ENCODE measurements at regions of chr6 and their contacts with region 1.

Region 1: DNA sequence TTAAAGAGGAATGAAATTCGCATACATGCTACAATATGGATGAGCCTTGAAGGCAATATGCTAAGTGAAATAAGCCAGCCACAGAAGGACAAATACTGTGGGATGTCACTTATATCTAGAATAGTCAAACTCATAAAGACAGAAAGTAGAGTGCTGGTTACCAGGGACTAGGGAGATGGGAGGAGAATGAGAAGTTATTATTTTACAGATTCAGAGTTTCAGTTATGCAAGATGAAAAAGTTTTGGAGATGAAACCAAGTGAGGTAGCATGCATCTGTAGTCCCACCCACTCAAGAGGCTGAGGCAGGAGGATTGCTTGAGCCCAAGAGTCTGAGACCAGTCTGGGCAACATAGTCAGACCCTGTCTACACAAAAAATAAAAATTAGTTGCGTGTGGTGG is 82.5 kb upstream of the ARID1B start:
- DNase-seq: no peak
- ATAC-seq: no peak
- H3K4me3 ChIP-seq: no peak overlapping the region
- H3K4me3 Mint-ChIP-seq: no peak overlapping the region
- H3K27ac ChIP-seq: no peak overlapping the region
- H3K27ac Mint-ChIP-seq: no peak overlapping the region
- H3K4me1 ChIP-seq: no peaks in the 10 kb centered on the region
- H3K4me1 Mint-ChIP-seq: no peaks in the 10 kb centered on the region
- H3K27me3 ChIP-seq: no peaks in the 10 kb centered on the region
- H3K27me3 Mint-ChIP-seq: peaks cover 2% of the 10 kb centered on the region
- CTCF ChIP-seq: no peak

Region 2: DNA sequence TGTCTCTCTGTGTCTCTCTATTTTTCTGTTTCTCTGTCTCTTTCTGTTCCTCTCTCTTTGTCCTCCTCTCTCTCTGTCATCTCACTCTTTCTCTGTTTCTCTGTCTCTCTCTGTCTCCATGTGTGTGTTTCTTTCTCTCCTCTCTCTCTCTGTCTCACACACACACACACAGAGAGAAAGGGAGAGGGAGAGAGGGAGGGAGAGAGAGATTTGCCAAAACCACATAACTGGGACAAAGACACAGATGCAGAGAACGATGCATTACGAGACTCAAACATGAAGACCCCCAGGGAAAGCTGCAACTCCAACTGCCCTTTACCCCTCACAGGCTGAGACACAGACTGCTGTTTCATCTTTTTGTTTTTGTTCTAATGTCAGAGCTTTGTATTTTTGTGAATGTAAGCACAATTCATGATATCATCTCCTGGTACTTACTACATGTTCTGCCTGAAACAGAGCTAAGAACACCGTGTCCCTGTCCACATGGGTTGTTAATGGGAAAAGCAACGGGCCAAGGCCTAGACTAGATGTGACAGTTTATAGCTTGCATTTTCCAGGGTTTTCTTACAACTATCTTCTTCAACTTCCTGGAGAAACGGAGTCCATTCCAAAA is 94.6 kb before region 1 on chr6:
- CTCF ChIA-PET with region 1: no interaction called
- POLR2A ChIA-PET with region 1: no interaction called
- intact Hi-C with region 1: no loop called
- DNase-seq: no peak
- ATAC-seq: no peak
- H3K4me3 ChIP-seq: no peak overlapping the region
- H3K4me3 Mint-ChIP-seq: no peak overlapping the region
- H3K27ac ChIP-seq: no peak overlapping the region
- H3K27ac Mint-ChIP-seq: no peak overlapping the region
- H3K4me1 ChIP-seq: no peaks in the 10 kb centered on the region
- H3K4me1 Mint-ChIP-seq: no peaks in the 10 kb centered on the region
- H3K27me3 ChIP-seq: no peaks in the 10 kb centered on the region
- H3K27me3 Mint-ChIP-seq: peaks cover 12% of the 10 kb centered on the region
- CTCF ChIP-seq: no peak

Region 3: DNA sequence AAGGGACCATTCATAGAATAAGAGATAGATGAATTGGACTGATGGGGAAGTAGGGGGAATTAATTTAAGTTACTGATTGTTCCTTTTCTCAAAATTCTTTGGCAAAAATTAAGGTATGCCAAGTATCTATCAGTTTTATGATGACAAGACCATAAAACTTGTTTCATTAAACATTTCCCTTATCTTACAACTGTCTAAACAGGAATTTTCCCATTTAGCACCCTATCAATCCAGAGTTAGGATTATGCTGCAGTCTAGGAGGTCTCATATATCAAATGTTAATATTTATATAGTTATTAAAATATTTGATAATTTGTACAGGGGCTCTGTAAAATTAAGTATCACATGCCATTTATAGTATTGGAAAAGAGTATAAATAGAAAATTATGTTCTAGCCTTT is 31.0 kb after region 1 on chr6:
- CTCF ChIA-PET with region 1: no interaction called
- POLR2A ChIA-PET with region 1: no interaction called
- intact Hi-C with region 1: loop called in 1 of 2 experiments (anchors 1 kb)
- DNase-seq: no peak
- ATAC-seq: no peak
- H3K4me3 ChIP-seq: no peak overlapping the region
- H3K4me3 Mint-ChIP-seq: no peak overlapping the region
- H3K27ac ChIP-seq: no peak overlapping the region
- H3K27ac Mint-ChIP-seq: no peak overlapping the region
- H3K4me1 ChIP-seq: no peaks in the 10 kb centered on the region
- H3K4me1 Mint-ChIP-seq: peaks cover 2% of the 10 kb centered on the region
- H3K27me3 ChIP-seq: no peaks in the 10 kb centered on the region
- H3K27me3 Mint-ChIP-seq: no peaks in the 10 kb centered on the region
- CTCF ChIP-seq: no peak